ENCODE measurements at regions of chr15 and their contacts with region 1.

Region 1: GRCh38 chr15:75029378-75030022 is 6.1 kb downstream of the PPCDC start:
- DNase-seq: peak; percentile 92 to 97 (median 96)
- H3K4me3 ChIP-seq: peak overlapping the region in 4 of 7 experiments; percentile 46 to 62 (median 54)
- H3K27ac ChIP-seq: peak overlapping the region; percentile 72 to 73
- H3K4me1 ChIP-seq: peaks cover 0 to 94% (median 84%) of the 10 kb centered on the region in 4 experiments
- H3K27me3 ChIP-seq: no peaks in the 10 kb centered on the region

Region 2: DNA sequence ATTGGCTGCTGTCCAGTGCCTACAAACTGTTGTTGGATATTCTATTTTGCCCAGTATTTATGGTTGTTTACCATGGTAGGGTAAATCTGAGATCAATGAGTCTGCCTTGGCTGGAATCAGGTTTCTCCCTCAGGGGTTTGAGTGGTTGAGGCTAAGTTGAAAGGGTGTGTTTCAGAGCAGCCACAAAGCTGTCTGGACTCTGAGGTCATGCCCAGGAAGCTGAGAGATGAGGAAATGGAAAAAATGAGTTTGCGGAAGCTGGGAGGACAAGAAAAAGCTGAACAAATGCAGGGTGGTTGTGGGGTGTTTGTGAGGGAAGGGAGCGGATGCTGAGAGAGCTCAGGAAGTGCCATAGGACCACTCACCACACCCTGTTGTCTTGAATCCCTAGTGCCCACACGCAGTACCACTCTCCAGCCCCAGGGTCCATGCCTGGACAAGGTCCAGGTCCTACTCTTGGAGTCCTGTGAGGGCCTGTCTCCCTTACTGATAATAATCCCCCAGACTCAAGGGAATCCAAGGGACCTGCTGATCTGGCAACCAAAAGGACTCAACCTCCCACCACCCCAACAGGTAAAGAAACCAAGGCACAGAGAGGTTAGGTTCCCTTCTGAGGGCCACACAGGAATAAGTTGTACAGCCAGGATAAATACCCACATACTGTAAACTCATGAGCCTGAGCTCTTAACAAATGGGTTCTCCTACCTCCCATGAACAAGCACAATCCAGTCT is 75.5 kb after region 1 on chr15:
- CTCF ChIA-PET with region 1: interaction called, 14 read pairs
- POLR2A ChIA-PET with region 1: interaction called, 11 read pairs
- DNase-seq: peak; percentile 84 to 95 (median 95)
- H3K4me3 ChIP-seq: peak overlapping the region in 3 of 7 experiments; percentile 5 to 28 (median 22)
- H3K27ac ChIP-seq: peak overlapping the region; percentile 38 to 55
- H3K4me1 ChIP-seq: peaks cover 21 to 56% (median 43%) of the 10 kb centered on the region in 4 experiments
- H3K27me3 ChIP-seq: no peaks in the 10 kb centered on the region

Region 3: GRCh38 chr15:75178171-75179075 is 148.9 kb after region 1 on chr15:
- CTCF ChIA-PET with region 1: interaction called, 18 read pairs
- POLR2A ChIA-PET with region 1: interaction called, 7 read pairs
- DNase-seq: peak in 2 of 3 donors; percentile 60 to 69
- H3K4me3 ChIP-seq: peak overlapping the region in 5 of 7 experiments; percentile 43 to 70 (median 60)
- H3K27ac ChIP-seq: peak overlapping the region; percentile 58 to 84
- H3K4me1 ChIP-seq: peaks cover 18 to 92% (median 80%) of the 10 kb centered on the region in 4 experiments
- H3K27me3 ChIP-seq: no peaks in the 10 kb centered on the region

Region 4: GRCh38 chr15:75215107-75216004 is 185.9 kb after region 1 on chr15:
- CTCF ChIA-PET with region 1: interaction called, 191 read pairs
- POLR2A ChIA-PET with region 1: interaction called, 4 read pairs
- DNase-seq: no peak
- H3K4me3 ChIP-seq: no peak overlapping the region
- H3K27ac ChIP-seq: peak overlapping the region in 1 of 2 experiments; percentile 55
- H3K4me1 ChIP-seq: peaks cover 0 to 35% (median 27%) of the 10 kb centered on the region in 4 experiments
- H3K27me3 ChIP-seq: no peaks in the 10 kb centered on the region